ENCODE measurements at regions of chr18 and their contacts with region 1.

Region 1: DNA sequence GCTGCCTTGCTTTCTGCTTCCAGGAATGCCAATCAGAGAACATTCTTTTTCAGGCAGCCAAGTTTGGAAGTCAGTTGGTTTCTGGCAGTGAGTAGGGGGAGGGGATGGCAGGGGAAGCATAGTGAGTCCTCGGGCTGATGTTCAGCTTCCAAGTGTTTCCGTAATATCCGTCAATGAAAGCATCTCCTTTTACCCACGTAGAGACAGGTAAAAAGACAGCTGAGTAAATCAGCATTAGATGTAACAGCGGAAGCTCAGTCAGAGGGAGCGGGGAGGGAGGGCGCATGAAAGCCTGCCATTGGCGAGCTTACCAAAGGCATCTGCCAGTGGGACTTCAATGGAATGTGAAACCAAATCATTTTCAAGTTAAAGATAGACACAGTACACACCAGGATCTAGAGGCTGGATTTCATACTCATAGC is 117.1 kb upstream of the DTNA start:
- DNase-seq: peak; percentile 9
- H3K4me3 Mint-ChIP-seq: peak overlapping the region; percentile 35
- H3K27ac Mint-ChIP-seq: no peak overlapping the region
- H3K4me1 Mint-ChIP-seq: no peaks in the 10 kb centered on the region
- H3K27me3 Mint-ChIP-seq: peaks cover 46% of the 10 kb centered on the region
- CTCF ChIP-seq: no peak

Region 2: DNA sequence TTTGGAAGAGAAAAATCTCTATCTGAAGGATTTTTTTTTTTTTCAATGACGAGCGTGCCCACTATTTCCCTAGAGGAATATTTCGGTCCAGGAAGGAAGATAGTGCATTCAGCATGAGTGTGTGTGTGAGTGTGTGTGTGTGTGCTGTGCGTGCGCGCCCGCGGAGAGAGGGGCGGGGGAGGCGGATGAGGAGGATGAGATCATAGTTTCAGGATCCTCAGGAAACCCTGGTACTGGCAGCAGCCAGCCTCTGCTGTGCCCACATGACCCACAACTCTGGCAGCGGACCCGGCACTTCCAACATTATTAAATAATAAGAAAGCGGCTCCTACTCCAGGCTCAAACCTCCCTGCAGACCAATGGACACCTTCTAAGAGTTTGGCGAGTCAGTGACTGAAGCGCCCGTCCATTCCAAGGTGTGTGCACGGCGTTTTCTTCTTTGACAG is 99.8 kb before region 1 on chr18:
- CTCF ChIA-PET with region 1: no interaction called
- POLR2A ChIA-PET with region 1: no interaction called
- intact Hi-C with region 1: no loop called
- DNase-seq: peak; percentile 14
- H3K4me3 Mint-ChIP-seq: peak overlapping the region; percentile 43
- H3K27ac Mint-ChIP-seq: no peak overlapping the region
- H3K4me1 Mint-ChIP-seq: no peaks in the 10 kb centered on the region
- H3K27me3 Mint-ChIP-seq: peaks cover 38% of the 10 kb centered on the region
- CTCF ChIP-seq: no peak

Region 3: DNA sequence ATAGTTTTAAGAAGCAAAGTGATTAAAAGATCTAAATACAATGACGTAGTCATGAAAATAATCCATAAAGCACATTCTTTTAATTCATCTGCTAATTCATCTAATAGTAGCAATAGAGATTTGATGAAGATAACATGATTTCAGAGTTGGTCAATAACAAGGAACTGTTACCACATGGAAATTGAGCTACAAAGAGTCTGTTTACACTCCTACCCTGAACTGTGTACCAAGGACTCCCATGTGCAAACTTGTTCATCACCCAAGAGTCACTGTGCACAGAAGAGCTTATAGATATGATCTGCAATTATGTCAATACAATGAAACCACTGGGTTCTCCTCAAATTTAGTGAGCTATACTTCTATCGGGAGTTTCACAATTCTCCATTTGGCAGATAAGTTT is 38.6 kb after region 1 on chr18:
- CTCF ChIA-PET with region 1: interaction called, 4 read pairs
- POLR2A ChIA-PET with region 1: interaction called, 3 read pairs
- intact Hi-C with region 1: loop called (anchors 5 kb)
- DNase-seq: no peak
- H3K4me3 Mint-ChIP-seq: no peak overlapping the region
- H3K27ac Mint-ChIP-seq: no peak overlapping the region
- H3K4me1 Mint-ChIP-seq: no peaks in the 10 kb centered on the region
- H3K27me3 Mint-ChIP-seq: peaks cover 11% of the 10 kb centered on the region
- CTCF ChIP-seq: no peak